ENCODE measurements at regions of chr3 and their contacts with region 1.

Region 1: GRCh38 chr3:114299421-114299820 is 5.6 kb downstream of the TIGIT start:
- DNase-seq: peak; percentile 70
- ATAC-seq: peak; percentile 45
- H3K4me3 Mint-ChIP-seq: peak overlapping the region; percentile 57
- H3K27ac Mint-ChIP-seq: peak overlapping the region; percentile 79
- H3K4me1 Mint-ChIP-seq: peaks cover 73% of the 10 kb centered on the region
- H3K27me3 Mint-ChIP-seq: no peaks in the 10 kb centered on the region

Region 2: GRCh38 chr3:114336122-114336697 is 36.8 kb after region 1 on chr3:
- CTCF ChIA-PET with region 1: interaction called, 13 read pairs
- DNase-seq: no peak
- ATAC-seq: no peak
- H3K4me3 Mint-ChIP-seq: no peak overlapping the region
- H3K27ac Mint-ChIP-seq: peak overlapping the region; percentile 38
- H3K4me1 Mint-ChIP-seq: peaks cover 77% of the 10 kb centered on the region
- H3K27me3 Mint-ChIP-seq: no peaks in the 10 kb centered on the region

Measured in activated CD8-positive, alpha-beta memory T cell treated with anti-CD3 and anti-CD28 coated beads, Interleukin-2, amount 10 ng/mL, durations not matched to agents 7 days and 5 days (primary cell).